ENCODE measurements at regions of chr5 and their contacts with region 1.

Region 1: DNA sequence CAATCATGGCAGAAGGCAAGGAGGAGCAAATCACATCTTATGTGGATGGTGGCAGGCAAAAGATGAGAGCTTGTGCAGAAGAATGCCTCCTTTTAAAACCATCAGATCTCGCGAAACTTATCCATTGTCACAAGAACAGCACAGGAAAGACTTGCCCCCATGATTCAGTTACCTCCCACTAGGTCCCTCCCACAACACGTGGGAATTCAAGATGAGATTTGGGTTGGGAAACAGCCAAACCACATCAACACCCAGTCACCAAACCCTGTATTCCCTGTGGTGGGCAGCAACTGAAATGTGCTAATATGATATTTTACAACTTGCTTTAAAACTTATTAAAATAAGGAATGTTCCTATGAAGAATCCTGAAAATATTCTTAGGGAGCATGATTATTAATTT is 54.2 kb downstream of the RASGRF2 start:
- DNase-seq: no peak
- H3K4me3 ChIP-seq: no peak overlapping the region
- CTCF ChIP-seq: no peak

Region 2: GRCh38 chr5:80959768-80960442 is 54.4 kb before region 1 on chr5 and contains the start of gene RASGRF2:
- in situ Hi-C with region 1: loop called (anchors 10 kb)
- DNase-seq: no peak
- H3K4me3 ChIP-seq: peak within 1 kb of the TSS; percentile 59
- CTCF ChIP-seq: no peak

Measured in astrocyte of the cerebellum (primary cell).